ENCODE measurements at regions of chr5 and their contacts with region 1.

Region 1: GRCh38 chr5:157390551-157391297 is 69.3 kb upstream of the NIPAL4 start:
- DNase-seq: peak; percentile 100
- ATAC-seq: peak; percentile 93
- H3K4me3 ChIP-seq: peak overlapping the region; percentile 30
- H3K27ac ChIP-seq: peak overlapping the region; percentile 87
- H3K4me1 ChIP-seq: peaks cover 59% of the 10 kb centered on the region
- H3K27me3 ChIP-seq: no peaks in the 10 kb centered on the region
- CTCF ChIP-seq: no peak

Region 2: GRCh38 chr5:157328277-157328912 is 62.3 kb before region 1 on chr5:
- CTCF ChIA-PET with region 1: interaction called, 5 read pairs
- POLR2A ChIA-PET with region 1: interaction called, 7 read pairs
- intact Hi-C with region 1: loop called (anchors 2 kb)
- DNase-seq: peak; percentile 90
- ATAC-seq: peak; percentile 100
- H3K4me3 ChIP-seq: peak overlapping the region; percentile 61
- H3K27ac ChIP-seq: no peak overlapping the region
- H3K4me1 ChIP-seq: peaks cover 13% of the 10 kb centered on the region
- H3K27me3 ChIP-seq: no peaks in the 10 kb centered on the region
- CTCF ChIP-seq: peak; percentile 99

Region 3: DNA sequence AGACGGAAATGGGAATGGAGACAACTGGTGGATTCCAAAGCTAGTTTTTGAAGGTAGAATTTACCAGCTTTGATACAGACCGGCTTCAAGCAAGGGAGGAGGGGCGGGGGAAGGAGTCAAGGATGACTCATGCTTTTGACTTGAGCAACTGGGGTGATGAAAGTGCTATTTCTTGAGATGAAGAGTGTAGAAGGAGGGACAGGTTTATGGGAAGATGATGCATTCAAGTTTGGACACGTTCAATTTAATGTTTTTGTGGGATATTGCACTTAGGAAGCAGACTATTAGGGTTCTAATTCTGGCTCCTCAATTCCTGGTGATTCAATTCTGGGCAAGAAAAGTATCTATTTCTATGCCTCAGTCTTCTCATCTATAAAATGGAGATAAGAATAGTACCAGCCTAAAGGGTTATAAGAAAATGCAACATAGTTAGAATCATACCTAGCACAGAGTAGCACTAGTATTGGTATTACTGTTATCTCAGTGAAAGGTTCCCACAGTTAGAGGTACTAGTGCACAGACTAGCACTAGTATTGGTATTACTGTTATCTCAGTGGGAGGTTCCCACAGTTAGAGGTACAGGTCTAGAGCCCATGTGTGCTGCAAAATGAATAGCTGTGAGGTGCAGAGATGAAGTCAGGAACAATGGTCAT is 73.9 kb after region 1 on chr5:
- CTCF ChIA-PET with region 1: interaction called, 3 read pairs
- POLR2A ChIA-PET with region 1: interaction called, 6 read pairs
- intact Hi-C with region 1: loop called (anchors 2 kb)
- DNase-seq: peak; percentile 97
- ATAC-seq: peak; percentile 82
- H3K4me3 ChIP-seq: no peak overlapping the region
- H3K27ac ChIP-seq: peak overlapping the region; percentile 49
- H3K4me1 ChIP-seq: peaks cover 26% of the 10 kb centered on the region
- H3K27me3 ChIP-seq: no peaks in the 10 kb centered on the region
- CTCF ChIP-seq: no peak